ENCODE measurements at regions of chr7 and their contacts with region 1.

Region 1: DNA sequence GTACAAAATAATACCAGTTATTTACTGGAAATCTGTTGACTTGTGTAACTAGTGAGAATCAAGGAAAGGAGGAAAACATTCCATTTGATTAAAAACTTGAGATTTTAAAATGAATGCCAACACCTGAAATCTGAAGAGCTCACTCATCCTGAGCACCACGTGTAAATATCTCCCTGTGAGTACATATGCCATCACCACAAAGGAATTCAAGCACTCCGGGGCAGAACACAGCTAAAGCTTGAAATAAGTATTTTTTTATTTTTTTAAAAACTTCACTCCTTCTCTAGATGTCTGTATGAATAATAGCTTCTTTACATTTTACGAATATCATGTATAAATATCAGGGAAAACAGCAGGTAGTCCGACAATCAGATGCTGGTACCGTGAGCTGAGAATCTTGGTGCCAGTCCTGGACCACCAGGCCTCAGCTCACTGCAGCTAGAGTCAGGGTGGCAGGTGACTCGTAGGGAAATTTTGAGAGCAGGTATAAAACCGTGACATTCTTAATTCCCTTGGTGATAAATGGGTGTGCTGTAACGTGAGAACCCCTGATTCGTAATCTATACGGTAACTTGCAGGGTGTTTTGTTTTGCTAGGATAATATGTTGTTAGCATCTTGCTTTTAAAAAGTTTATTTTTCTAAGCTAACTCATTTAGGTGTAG is 12.7 kb downstream of the LMTK2 start:
- DNase-seq: peak; percentile 59
- H3K4me3 Mint-ChIP-seq: peak overlapping the region; percentile 50
- H3K27ac Mint-ChIP-seq: peak overlapping the region; percentile 87
- H3K4me1 Mint-ChIP-seq: peaks cover 42% of the 10 kb centered on the region
- H3K27me3 Mint-ChIP-seq: no peaks in the 10 kb centered on the region
- CTCF ChIP-seq: no peak

Region 2: DNA sequence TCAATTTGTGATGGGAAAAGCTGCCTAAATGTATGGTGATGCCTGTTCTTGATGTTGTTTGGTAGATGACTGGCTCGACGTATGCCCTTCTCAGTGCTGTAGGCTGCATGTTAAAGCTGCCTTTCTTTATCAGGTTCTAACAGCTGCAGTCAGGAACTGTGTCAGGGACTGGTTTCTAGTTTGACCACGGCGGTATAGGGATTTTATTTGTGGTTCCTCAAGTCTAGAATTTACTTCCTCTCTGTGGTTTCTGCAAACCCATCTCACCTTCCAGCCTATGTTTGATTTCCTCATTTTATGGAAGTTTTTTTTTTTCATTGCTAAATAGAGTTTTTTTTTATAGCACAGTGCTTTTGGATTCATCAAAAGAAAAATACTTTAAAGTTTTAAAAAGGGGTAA is 13.8 kb after region 1 on chr7:
- CTCF ChIA-PET with region 1: interaction called, 9 read pairs
- POLR2A ChIA-PET with region 1: interaction called, 117 read pairs
- intact Hi-C with region 1: no loop called
- DNase-seq: no peak
- H3K4me3 Mint-ChIP-seq: peak overlapping the region; percentile 33
- H3K27ac Mint-ChIP-seq: peak overlapping the region; percentile 91
- H3K4me1 Mint-ChIP-seq: peaks cover 35% of the 10 kb centered on the region
- H3K27me3 Mint-ChIP-seq: no peaks in the 10 kb centered on the region
- CTCF ChIP-seq: no peak

Region 3: GRCh38 chr7:98387544-98388224 is 268.3 kb after region 1 on chr7:
- CTCF ChIA-PET with region 1: no interaction called
- POLR2A ChIA-PET with region 1: no interaction called
- intact Hi-C with region 1: no loop called
- DNase-seq: no peak
- H3K4me3 Mint-ChIP-seq: no peak overlapping the region
- H3K27ac Mint-ChIP-seq: no peak overlapping the region
- H3K4me1 Mint-ChIP-seq: no peaks in the 10 kb centered on the region
- H3K27me3 Mint-ChIP-seq: no peaks in the 10 kb centered on the region
- CTCF ChIP-seq: no peak